Pancreas (tissue), 10 donors: ENCODE measurements at regions of chr9 and their contacts with region 1.

Region 1: GRCh38 chr9:101639785-101640665 is 45.3 kb upstream of the PPP3R2 start:
- DNase-seq: no peak
- ATAC-seq: peak; percentile 45 to 74 (median 64)
- H3K4me3 ChIP-seq: no peak overlapping the region
- H3K27ac ChIP-seq: no peak overlapping the region
- H3K4me1 ChIP-seq: peaks cover 8 to 17% (median 13%) of the 10 kb centered on the region in 3 donors
- H3K27me3 ChIP-seq: no peaks in the 10 kb centered on the region
- CTCF ChIP-seq: no peak

Region 2: GRCh38 chr9:101400120-101400519 is 239.9 kb before region 1 on chr9:
- intact Hi-C with region 1: no loop called
- DNase-seq: peak in 3 of 6 donors; percentile 26 to 47 (median 36)
- ATAC-seq: no peak
- H3K4me3 ChIP-seq: peak overlapping the region; percentile 58 to 79 (median 70)
- H3K27ac ChIP-seq: peak overlapping the region in 2 of 4 donors; percentile 82 to 90
- H3K4me1 ChIP-seq: peaks cover 15 to 25% (median 24%) of the 10 kb centered on the region in 3 donors
- H3K27me3 ChIP-seq: no peaks in the 10 kb centered on the region
- CTCF ChIP-seq: no peak

Region 3: DNA sequence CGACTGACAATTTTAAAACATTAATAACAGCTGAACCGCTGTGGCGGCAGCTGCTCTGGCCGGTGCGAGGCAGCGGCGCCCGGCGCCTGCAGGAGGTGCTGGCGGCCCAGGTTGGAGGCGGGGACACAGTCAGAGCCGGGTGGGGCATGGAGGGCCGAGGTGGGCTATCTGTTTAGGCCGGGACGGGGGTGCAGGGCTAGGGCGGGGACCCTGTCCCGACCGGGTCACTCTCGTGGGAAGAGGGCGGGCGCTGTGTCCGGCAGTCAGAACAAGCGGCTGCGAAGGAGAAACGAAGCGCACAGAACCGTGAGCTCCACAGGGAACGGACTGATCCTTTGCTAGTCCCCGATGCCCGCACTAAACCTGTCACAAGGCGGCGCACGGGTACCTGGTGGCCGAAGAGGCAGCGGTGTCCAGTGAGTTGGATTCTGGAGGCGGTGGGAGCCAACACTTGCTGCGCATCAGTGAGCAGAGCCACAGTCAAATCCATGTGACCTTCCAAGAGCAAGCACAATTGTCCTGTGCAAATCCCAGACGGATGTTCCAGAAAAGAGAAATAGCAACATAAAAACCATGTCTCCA is 190.8 kb before region 1 on chr9:
- intact Hi-C with region 1: no loop called
- DNase-seq: peak; percentile 83 to 91 (median 90)
- ATAC-seq: peak; percentile 94 to 97 (median 96)
- H3K4me3 ChIP-seq: peak overlapping the region; percentile 26 to 60 (median 47)
- H3K27ac ChIP-seq: peak overlapping the region; percentile 65 to 87 (median 80)
- H3K4me1 ChIP-seq: peaks cover 9 to 28% (median 24%) of the 10 kb centered on the region in 3 donors
- H3K27me3 ChIP-seq: no peaks in the 10 kb centered on the region
- CTCF ChIP-seq: peak; percentile 30 to 48 (median 38)

Region 4: DNA sequence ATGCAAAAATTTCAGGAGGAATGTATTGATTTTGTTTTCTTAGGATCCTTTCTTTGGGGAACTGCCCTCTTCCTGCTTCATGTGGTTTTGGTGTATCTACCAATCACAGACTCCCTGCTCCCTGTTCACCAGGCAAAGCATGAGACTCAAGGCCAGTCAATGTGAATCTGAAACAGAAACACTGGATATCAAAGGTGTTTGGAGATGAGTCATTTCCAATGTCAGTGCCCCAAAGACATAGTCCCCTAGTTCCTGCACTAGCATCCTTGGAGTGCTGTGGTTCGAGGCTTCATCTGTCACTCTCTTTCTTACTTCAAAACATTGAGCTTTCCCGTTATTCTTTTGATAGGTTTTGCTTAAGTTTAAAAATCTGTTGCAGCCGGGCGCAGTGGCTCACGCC is 53.4 kb before region 1 on chr9:
- intact Hi-C with region 1: loop called in 1 of 3 experiments (anchors 10 kb)
- DNase-seq: no peak
- ATAC-seq: peak in 1 of 4 donors; percentile 44
- H3K4me3 ChIP-seq: no peak overlapping the region
- H3K27ac ChIP-seq: no peak overlapping the region
- H3K4me1 ChIP-seq: no peaks in the 10 kb centered on the region
- H3K27me3 ChIP-seq: no peaks in the 10 kb centered on the region
- CTCF ChIP-seq: no peak